PC-9 (cell line): ENCODE measurements at regions of chr17 and their contacts with region 1.

Region 1: GRCh38 chr17:46044286-46044928 is 45.4 kb downstream of the STH start:
- DNase-seq: peak; percentile 55 to 77
- H3K4me3 ChIP-seq: no peak overlapping the region
- H3K27ac ChIP-seq: no peak overlapping the region
- H3K4me1 ChIP-seq: no peaks in the 10 kb centered on the region
- H3K27me3 ChIP-seq: no peaks in the 10 kb centered on the region
- CTCF ChIP-seq: peak; percentile 86

Region 2: DNA sequence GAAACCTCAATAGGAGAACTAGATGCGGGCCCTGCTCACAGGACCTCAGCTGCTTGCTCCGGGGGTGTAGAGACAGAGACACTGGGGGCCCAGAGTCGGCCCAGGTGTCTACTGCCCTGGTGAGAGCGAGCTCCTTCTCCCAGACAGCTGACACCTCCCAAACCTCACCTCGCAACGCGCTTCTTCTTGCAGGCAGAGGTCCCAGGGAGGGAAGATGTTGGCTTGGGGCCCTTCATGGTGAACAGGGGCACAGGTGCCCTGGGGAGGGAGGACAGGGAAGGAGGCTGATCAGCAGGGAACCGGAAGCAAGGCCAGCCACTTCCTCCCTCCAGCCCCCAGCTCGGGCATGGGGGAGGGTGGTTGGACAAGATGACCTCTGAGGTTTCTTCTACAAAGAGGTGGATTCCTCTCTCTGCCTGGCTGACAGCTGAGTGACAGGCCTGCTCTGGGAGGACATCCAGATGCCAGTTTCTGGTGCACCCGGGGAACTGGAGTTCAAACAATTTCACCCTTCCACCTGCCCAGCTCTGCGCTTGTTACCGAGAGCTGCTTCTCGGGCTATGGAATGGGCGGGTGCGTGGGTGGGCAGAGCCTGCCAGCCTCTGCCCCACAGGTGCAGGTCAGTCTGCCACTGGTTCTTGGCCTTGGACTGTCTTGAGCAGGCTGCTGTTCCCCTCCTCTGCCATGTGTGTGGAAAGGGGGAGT is 1117.4 kb before region 1 on chr17:
- CTCF ChIA-PET with region 1: no interaction called
- POLR2A ChIA-PET with region 1: no interaction called
- intact Hi-C with region 1: no loop called
- DNase-seq: no peak
- H3K4me3 ChIP-seq: no peak overlapping the region
- H3K27ac ChIP-seq: no peak overlapping the region
- H3K4me1 ChIP-seq: no peaks in the 10 kb centered on the region
- H3K27me3 ChIP-seq: no peaks in the 10 kb centered on the region
- CTCF ChIP-seq: no peak

Region 3: DNA sequence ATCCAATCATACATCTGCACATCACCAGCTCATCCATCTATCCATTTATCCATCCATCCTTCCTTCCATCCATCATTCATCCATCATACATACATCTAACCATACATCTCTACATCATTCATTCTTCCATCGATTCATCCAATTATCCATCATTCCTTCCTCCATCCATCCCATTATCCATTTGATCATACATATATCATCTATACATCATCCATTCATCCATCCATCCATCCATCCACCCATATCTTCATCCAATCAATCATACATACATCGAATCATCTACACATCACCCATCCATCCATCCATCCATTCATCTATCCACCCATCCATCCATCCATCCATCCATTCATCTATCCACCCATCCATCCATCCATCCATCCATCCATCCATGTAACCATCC is 74.7 kb before region 1 on chr17:
- CTCF ChIA-PET with region 1: interaction called, 13 read pairs
- POLR2A ChIA-PET with region 1: no interaction called
- intact Hi-C with region 1: no loop called
- DNase-seq: no peak
- H3K4me3 ChIP-seq: no peak overlapping the region
- H3K27ac ChIP-seq: no peak overlapping the region
- H3K4me1 ChIP-seq: no peaks in the 10 kb centered on the region
- H3K27me3 ChIP-seq: peaks cover 66% of the 10 kb centered on the region
- CTCF ChIP-seq: no peak

Region 4: DNA sequence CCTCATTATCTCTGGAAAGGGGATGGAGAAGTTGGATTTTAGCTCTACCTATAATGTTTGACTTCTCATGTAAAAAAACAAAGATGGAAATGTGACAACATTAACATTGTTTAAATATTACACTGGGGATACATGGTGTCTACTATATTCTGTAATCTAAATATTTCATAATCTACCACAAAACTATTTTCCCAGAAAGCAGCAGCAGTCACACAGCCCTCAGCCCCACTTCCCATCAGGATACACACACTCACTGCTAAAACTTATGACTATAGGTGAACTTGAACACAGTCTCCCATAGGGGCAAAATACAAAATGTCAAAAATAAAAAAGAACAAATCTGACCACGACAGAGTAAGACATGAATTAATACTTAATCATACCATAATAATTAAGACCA is 53.1 kb after region 1 on chr17:
- CTCF ChIA-PET with region 1: no interaction called
- POLR2A ChIA-PET with region 1: no interaction called
- intact Hi-C with region 1: no loop called
- DNase-seq: no peak
- H3K4me3 ChIP-seq: no peak overlapping the region
- H3K27ac ChIP-seq: 0 out of 2 replicates have a peak overlapping the region, but pooled peaks have one; percentile 11
- H3K4me1 ChIP-seq: peaks cover 22% of the 10 kb centered on the region
- H3K27me3 ChIP-seq: no peaks in the 10 kb centered on the region
- CTCF ChIP-seq: no peak

Region 5: GRCh38 chr17:46199379-46199778 is 155.0 kb after region 1 on chr17:
- CTCF ChIA-PET with region 1: no interaction called
- POLR2A ChIA-PET with region 1: interaction called, 10 read pairs
- intact Hi-C with region 1: loop called (anchors 5 kb)
- DNase-seq: no peak
- H3K4me3 ChIP-seq: no peak overlapping the region
- H3K27ac ChIP-seq: no peak overlapping the region
- H3K4me1 ChIP-seq: peaks cover 7% of the 10 kb centered on the region
- H3K27me3 ChIP-seq: no peaks in the 10 kb centered on the region
- CTCF ChIP-seq: no peak

Region 6: GRCh38 chr17:46212634-46213435 is 168.4 kb after region 1 on chr17:
- CTCF ChIA-PET with region 1: interaction called, 17 read pairs
- POLR2A ChIA-PET with region 1: no interaction called
- intact Hi-C with region 1: loop called (anchors 5 kb)
- DNase-seq: peak; percentile 22 to 46
- H3K4me3 ChIP-seq: no peak overlapping the region
- H3K27ac ChIP-seq: no peak overlapping the region
- H3K4me1 ChIP-seq: no peaks in the 10 kb centered on the region
- H3K27me3 ChIP-seq: no peaks in the 10 kb centered on the region
- CTCF ChIP-seq: peak; percentile 85